GM10248 (cell line): ENCODE measurements at regions of chr1 and their contacts with region 1.

Region 1: GRCh38 chr1:89681045-89681729 is 48.3 kb downstream of the LRRC8C start:
- DNase-seq: peak; percentile 60
- CTCF ChIP-seq: no peak

Region 2: GRCh38 chr1:89524369-89525168 is 156.6 kb before region 1 on chr1 and contains the start of gene LRRC8B:
- CTCF ChIA-PET with region 1: no interaction called
- POLR2A ChIA-PET with region 1: interaction called, 11 read pairs
- DNase-seq: peak; percentile 88
- CTCF ChIP-seq: no peak